H1 (cell line): ENCODE measurements at regions of chr14 and their contacts with region 1.

Region 1: GRCh38 chr14:64891839-64892375 is 12.2 kb upstream of the SPTB start:
- DNase-seq: no peak
- H3K4me3 ChIP-seq: no peak overlapping the region
- H3K27ac ChIP-seq: no peak overlapping the region
- H3K4me1 ChIP-seq: no peaks in the 10 kb centered on the region
- H3K27me3 ChIP-seq: no peaks in the 10 kb centered on the region
- CTCF ChIP-seq: peak in 2 of 3 experiments; percentile 59 to 64; a peak in 2 of 4 replicates
- EP300 ChIP-seq: no peak
- POLR2A ChIP-seq: no peak
- RAD21 ChIP-seq: peak; percentile 80 to 90

Region 2: DNA sequence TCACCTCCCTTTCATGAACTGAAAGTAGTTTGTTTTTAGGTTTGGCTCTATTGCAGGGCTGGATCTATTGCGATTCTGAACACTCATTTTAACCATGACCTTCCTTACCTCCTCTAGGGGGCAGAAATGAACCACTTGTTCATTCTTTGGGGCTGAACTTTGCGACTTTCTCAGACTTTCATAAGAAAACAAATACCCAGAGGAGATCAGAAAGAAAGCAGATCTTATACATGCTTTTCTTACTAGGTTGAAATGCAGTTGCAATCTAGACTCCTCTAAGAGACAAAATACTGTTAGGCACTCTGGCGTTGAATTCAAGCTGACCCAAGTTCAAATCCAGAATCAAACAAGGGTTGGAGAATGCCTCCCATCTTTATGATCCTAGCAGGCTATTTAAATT is 220.3 kb before region 1 on chr14:
- CTCF ChIA-PET with region 1: interaction called, 13 read pairs
- POLR2A ChIA-PET with region 1: no interaction called
- DNase-seq: no peak
- H3K4me3 ChIP-seq: no peak overlapping the region
- H3K27ac ChIP-seq: no peak overlapping the region
- H3K4me1 ChIP-seq: peaks cover 0 to 4% (median 0%) of the 10 kb centered on the region in 4 experiments; a peak in 2 of 7 replicates
- H3K27me3 ChIP-seq: no peaks in the 10 kb centered on the region
- CTCF ChIP-seq: peak in 2 of 3 experiments; percentile 73 to 77; a peak in 3 of 4 replicates
- EP300 ChIP-seq: no peak
- POLR2A ChIP-seq: no peak
- RAD21 ChIP-seq: peak; percentile 85 to 91

Region 3: DNA sequence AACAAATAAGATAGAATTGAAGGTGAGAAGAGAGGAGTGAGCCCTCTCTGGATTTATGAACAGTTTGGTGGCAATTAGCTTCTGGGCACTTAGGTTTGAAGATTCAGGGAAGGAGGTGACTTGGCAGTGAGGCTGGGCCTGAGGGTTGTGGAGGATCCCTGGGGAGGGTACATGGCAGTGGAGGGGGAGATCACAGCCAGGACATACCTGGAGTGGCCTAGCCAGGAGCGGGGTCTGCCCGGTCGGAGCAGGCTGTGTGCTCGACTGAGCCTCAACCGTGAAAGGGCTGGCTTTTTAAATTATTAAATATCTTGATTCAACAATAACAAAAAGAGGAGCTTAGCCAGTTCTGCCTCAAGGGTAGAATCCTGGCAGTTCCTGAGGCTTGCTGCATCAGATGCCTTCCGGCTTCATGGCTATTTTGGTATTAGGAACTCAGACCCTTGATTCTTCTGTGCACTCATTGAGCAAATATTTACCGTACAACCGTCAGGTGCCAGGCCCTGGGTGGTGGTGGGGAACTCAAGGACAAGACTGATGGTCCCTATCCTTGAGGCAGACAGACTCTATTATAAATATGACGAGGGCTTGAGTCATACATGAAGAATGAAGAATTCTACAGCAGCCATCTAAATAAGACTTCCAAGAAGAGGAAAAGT is 85.6 kb before region 1 on chr14:
- CTCF ChIA-PET with region 1: interaction called, 323 read pairs
- POLR2A ChIA-PET with region 1: interaction called, 3 read pairs
- DNase-seq: no peak
- H3K4me3 ChIP-seq: no peak overlapping the region
- H3K27ac ChIP-seq: no peak overlapping the region
- H3K4me1 ChIP-seq: no peaks in the 10 kb centered on the region; a peak in 1 of 7 replicates
- H3K27me3 ChIP-seq: no peaks in the 10 kb centered on the region
- CTCF ChIP-seq: no peak
- EP300 ChIP-seq: no peak
- POLR2A ChIP-seq: no peak
- RAD21 ChIP-seq: no peak

Region 4: DNA sequence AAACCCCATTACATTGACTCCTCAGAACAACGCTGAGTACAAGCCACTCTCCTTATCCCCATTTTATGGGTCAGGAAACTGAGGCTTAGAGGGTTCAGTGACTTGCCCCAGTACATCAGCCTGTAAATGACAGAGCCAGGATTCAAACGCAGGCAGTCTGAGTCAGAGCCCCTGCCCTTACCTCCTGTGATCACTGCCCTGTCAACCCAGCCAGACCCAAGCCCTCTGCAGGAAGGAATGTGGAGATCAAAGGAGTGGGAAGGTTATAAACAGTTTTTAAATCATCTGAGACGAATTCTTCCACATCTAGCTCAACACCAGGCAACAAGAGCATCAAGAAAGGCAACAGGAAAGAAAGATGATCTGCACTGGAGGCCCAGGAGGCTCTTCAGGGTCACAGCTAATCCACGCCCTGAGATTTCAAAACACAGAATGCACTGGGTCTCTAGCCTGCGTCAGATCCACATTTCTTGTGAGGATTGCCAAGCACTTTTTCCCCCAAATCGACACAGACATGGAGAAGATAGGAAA is 50.7 kb before region 1 on chr14:
- CTCF ChIA-PET with region 1: interaction called, 37 read pairs
- POLR2A ChIA-PET with region 1: no interaction called
- DNase-seq: peak in 1 of 2 experiments; percentile 21
- H3K4me3 ChIP-seq: no peak overlapping the region
- H3K27ac ChIP-seq: no peak overlapping the region
- H3K4me1 ChIP-seq: peaks cover 3 to 15% (median 6%) of the 10 kb centered on the region in 4 experiments; a peak in 3 of 7 replicates
- H3K27me3 ChIP-seq: no peaks in the 10 kb centered on the region
- CTCF ChIP-seq: peak; percentile 43 to 67 (median 54)
- EP300 ChIP-seq: no peak
- POLR2A ChIP-seq: no peak
- RAD21 ChIP-seq: peak; percentile 34 to 51

Region 5: GRCh38 chr14:64861916-64862315 is 30.0 kb before region 1 on chr14:
- CTCF ChIA-PET with region 1: interaction called, 36 read pairs
- POLR2A ChIA-PET with region 1: no interaction called
- DNase-seq: no peak
- H3K4me3 ChIP-seq: no peak overlapping the region
- H3K27ac ChIP-seq: no peak overlapping the region
- H3K4me1 ChIP-seq: peaks cover 6 to 22% (median 10%) of the 10 kb centered on the region in 4 experiments; a peak in 5 of 7 replicates
- H3K27me3 ChIP-seq: no peaks in the 10 kb centered on the region; a peak in 1 of 7 replicates
- CTCF ChIP-seq: no peak
- EP300 ChIP-seq: no peak
- POLR2A ChIP-seq: no peak
- RAD21 ChIP-seq: no peak

Region 6: DNA sequence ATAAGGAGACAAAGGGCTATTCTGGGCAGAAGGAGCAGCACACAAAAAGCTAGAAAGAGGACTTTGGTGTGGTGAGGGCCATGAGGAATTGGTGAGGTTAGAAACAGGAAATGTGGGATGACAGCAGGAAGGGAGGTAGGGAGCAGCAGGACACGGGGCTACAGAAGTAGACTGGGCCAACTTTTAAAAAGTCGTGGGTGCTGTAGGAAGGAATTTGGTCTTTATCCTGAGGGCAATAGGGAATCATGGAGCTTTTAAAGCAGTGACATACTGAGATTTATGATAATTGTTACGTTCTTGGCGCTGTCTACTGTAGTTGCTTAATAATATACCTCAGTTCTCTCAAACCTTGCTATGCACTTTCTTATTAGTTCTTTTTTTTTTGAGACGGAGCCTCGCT is 14.1 kb after region 1 on chr14:
- CTCF ChIA-PET with region 1: interaction called, 39 read pairs
- POLR2A ChIA-PET with region 1: no interaction called
- DNase-seq: no peak
- H3K4me3 ChIP-seq: no peak overlapping the region
- H3K27ac ChIP-seq: no peak overlapping the region
- H3K4me1 ChIP-seq: no peaks in the 10 kb centered on the region
- H3K27me3 ChIP-seq: peaks cover 0 to 1% (median 0%) of the 10 kb centered on the region in 4 experiments; a peak in 1 of 7 replicates
- CTCF ChIP-seq: no peak
- EP300 ChIP-seq: no peak
- POLR2A ChIP-seq: no peak
- RAD21 ChIP-seq: no peak

Region 7: DNA sequence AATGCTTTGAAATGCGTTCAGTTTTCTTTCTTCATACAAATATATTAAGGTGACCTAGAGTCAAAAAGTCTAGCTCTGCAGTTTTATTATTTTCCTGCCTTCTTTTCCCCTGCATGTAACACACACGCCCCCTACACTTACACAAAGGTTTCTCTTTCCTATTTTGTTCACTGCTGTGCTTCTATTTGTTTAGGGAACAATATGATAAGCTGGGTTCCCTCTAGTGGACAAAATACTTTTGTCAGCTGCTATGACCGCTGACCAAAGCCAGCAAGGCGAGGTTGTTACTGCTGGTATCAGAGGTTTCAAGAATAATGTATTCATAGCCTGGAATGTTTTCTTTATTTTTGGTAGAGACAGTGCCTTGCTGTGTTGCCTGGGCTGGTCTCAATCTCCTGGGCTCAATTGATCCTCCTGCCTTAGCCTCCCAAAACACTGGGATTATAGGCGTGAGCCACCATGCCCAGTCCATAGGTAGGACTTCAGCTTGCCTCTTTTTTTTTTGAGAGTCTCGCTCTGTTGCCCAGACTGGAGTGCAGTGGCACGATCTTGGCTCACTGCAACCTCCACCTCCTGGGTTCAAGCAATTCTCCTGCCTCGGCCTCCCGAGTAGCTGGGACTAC is 128.1 kb after region 1 on chr14:
- CTCF ChIA-PET with region 1: interaction called, 19 read pairs
- POLR2A ChIA-PET with region 1: no interaction called
- DNase-seq: no peak
- H3K4me3 ChIP-seq: no peak overlapping the region
- H3K27ac ChIP-seq: no peak overlapping the region
- H3K4me1 ChIP-seq: no peaks in the 10 kb centered on the region
- H3K27me3 ChIP-seq: no peaks in the 10 kb centered on the region
- CTCF ChIP-seq: peak in 2 of 3 experiments; percentile 64 to 67; a peak in 3 of 4 replicates
- EP300 ChIP-seq: no peak
- POLR2A ChIP-seq: no peak
- RAD21 ChIP-seq: peak; percentile 49 to 61; a peak in 3 of 4 replicates

Region 8: GRCh38 chr14:65062096-65063077 is 170.5 kb after region 1 on chr14:
- CTCF ChIA-PET with region 1: no interaction called
- POLR2A ChIA-PET with region 1: no interaction called
- DNase-seq: no peak
- H3K4me3 ChIP-seq: no peak overlapping the region
- H3K27ac ChIP-seq: no peak overlapping the region
- H3K4me1 ChIP-seq: no peaks in the 10 kb centered on the region
- H3K27me3 ChIP-seq: no peaks in the 10 kb centered on the region
- CTCF ChIP-seq: no peak
- EP300 ChIP-seq: no peak
- POLR2A ChIP-seq: no peak
- RAD21 ChIP-seq: no peak